Activated B cell treated with CpG ODN at 0.5 μM for 24 hours (primary cell): ENCODE measurements at regions of chr5 and their contacts with region 1.

Region 1: GRCh38 chr5:135426102-135427082 is 20.8 kb downstream of the DCANP1 start:
- DNase-seq: no peak
- ATAC-seq: peak; percentile 71
- H3K4me3 Mint-ChIP-seq: no peak overlapping the region
- H3K27ac Mint-ChIP-seq: no peak overlapping the region
- H3K4me1 Mint-ChIP-seq: no peaks in the 10 kb centered on the region
- H3K27me3 Mint-ChIP-seq: peaks cover 22% of the 10 kb centered on the region
- CTCF ChIP-seq: no peak

Region 2: GRCh38 chr5:135437796-135438560 is 11.6 kb after region 1 on chr5:
- CTCF ChIA-PET with region 1: interaction called, 16 read pairs
- POLR2A ChIA-PET with region 1: no interaction called
- intact Hi-C with region 1: no loop called
- DNase-seq: no peak
- ATAC-seq: no peak
- H3K4me3 Mint-ChIP-seq: no peak overlapping the region
- H3K27ac Mint-ChIP-seq: no peak overlapping the region
- H3K4me1 Mint-ChIP-seq: peaks cover 21% of the 10 kb centered on the region
- H3K27me3 Mint-ChIP-seq: peaks cover 14% of the 10 kb centered on the region
- CTCF ChIP-seq: no peak